Activated CD8-positive, alpha-beta T cell treated with anti-CD3 and anti-CD28 coated beads for 36 hours (primary cell): ENCODE measurements at regions of chr2 and their contacts with region 1.

Region 1: DNA sequence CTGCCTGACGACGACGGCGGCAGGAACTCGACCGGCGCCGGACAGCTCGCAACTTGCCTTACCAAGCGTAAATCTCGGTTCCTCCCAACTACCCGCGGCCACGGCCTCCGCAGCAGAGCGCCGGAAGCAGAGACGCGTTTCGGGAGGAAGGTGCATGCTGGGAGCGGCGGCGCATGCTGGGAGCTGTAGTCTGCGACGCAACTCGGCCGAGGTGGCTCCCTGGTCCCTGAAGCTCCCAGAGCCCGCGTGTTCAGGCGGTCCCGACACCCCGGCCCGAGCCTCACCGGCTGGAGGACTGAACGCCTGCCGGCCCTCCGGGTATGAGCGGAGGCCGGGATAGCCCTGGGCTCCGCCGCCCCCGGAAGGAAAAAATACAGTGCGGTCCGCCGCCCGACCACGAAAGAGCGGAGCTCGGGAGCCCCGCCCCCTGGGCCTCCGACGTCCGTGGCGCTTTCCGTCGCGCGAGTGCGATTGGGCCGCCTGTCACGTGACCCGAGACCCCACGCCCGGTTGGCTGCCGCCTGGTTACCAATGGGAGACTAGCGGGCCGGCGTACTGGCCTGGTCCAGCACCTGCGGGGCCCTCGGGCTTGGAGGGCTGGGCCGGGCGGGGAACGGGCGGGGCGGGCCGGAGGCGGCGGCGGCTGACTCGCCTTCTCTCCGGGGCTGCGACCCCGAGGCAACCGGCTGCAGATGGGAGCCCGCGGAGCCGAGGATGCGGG is at the start of gene CAPN10:
- DNase-seq: peak; percentile 98
- ATAC-seq: peak; percentile 88
- H3K4me3 Mint-ChIP-seq: peak within 1 kb of the TSS; percentile 95
- H3K27ac Mint-ChIP-seq: peak within 1 kb of the TSS; percentile 92
- H3K4me1 Mint-ChIP-seq: peaks cover 36% of the 10 kb centered on the region
- H3K27me3 Mint-ChIP-seq: no peaks in the 10 kb centered on the region
- CTCF ChIP-seq: no peak
- total RNA-seq, gene CAPN10: 26.8 to 29.1 TPM

Region 2: DNA sequence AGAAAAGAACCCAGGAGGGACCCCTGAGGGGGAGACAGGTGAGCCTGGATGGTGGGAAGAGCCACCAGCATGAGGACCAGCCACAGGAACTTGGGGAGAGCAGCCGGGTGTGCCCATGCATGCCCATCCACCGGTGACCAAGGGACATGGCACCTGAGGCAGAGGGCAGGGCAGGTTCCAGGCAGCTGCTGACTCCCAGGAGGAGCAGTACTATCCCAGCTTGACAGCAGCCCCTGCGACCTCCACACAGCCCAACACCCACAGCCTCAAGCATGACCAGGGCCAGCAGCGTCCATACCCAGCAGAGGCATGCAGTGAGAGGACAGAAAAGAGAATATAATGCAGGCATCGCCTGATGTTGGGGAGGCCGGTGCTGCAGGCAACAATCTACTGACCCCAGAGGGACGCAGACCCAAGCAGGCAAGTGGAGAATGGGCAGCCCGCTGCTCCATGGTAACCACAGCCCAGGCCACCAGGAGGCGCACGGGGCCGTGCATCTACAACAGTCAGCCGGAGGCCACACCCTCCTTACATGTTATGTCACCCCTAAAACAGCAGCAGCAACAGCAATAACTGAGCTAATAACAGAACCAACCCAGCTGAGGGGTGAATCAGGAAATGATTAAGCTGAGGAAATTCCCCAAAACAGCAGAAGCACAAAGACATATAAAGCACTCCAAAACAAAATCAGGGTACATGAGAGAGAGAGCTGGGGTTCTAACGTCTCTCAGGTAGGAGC is 72.6 kb before region 1 on chr2:
- CTCF ChIA-PET with region 1: interaction called, 48 read pairs
- POLR2A ChIA-PET with region 1: interaction called, 4 read pairs
- intact Hi-C with region 1: no loop called
- DNase-seq: peak; percentile 95
- ATAC-seq: peak; percentile 100
- H3K4me3 Mint-ChIP-seq: no peak overlapping the region
- H3K27ac Mint-ChIP-seq: peak overlapping the region; percentile 47
- H3K4me1 Mint-ChIP-seq: peaks cover 13% of the 10 kb centered on the region
- H3K27me3 Mint-ChIP-seq: no peaks in the 10 kb centered on the region
- CTCF ChIP-seq: peak; percentile 93

Region 3: DNA sequence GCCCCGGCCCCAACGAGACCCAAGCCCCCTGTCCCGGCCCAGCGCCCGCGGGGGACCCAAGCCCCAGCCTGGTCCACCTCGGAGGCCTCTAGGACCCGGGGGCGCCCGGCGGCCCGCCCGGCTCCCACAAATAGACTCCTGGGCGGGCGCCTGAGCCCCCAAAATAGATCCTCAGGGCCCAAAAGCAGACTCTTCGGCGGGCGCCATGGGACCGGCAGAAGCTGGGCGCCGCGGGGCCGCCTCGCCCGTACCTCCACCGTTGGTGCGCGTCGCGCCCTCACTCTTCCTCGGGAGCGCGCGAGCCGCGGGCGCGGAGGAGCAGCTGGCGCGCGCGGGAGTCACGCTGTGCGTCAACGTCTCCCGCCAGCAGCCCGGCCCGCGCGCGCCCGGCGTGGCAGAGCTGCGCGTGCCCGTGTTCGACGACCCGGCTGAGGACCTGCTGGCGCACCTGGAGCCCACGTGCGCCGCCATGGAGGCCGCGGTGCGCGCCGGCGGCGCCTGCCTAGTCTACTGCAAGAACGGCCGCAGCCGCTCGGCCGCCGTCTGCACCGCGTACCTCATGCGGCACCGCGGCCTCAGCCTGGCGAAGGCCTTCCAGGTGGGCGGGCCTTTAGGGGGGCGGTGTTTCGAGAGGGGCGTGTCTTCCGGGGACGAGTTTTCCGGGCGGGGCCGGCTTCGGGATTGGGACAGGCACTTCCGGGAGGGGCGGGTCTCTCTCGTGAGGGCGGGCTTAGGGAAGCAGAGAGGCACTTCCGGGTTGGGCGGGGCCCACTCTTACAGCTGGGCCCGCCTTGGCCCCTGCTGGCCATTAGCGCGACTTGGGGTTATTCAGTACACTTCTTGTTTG is 25.7 kb before region 1 on chr2:
- CTCF ChIA-PET with region 1: interaction called, 50 read pairs
- POLR2A ChIA-PET with region 1: interaction called, 118 read pairs
- intact Hi-C with region 1: no loop called
- DNase-seq: peak; percentile 100
- ATAC-seq: peak; percentile 65
- H3K4me3 Mint-ChIP-seq: peak overlapping the region; percentile 77
- H3K27ac Mint-ChIP-seq: peak overlapping the region; percentile 91
- H3K4me1 Mint-ChIP-seq: peaks cover 71% of the 10 kb centered on the region
- H3K27me3 Mint-ChIP-seq: no peaks in the 10 kb centered on the region
- CTCF ChIP-seq: no peak

Region 4: GRCh38 chr2:240624950-240625621 is 38.7 kb after region 1 on chr2 and contains the start of gene GPR35:
- CTCF ChIA-PET with region 1: interaction called, 21 read pairs
- POLR2A ChIA-PET with region 1: interaction called, 23 read pairs
- intact Hi-C with region 1: no loop called
- DNase-seq: peak; percentile 93
- ATAC-seq: peak; percentile 55
- H3K4me3 Mint-ChIP-seq: peak within 1 kb of the TSS; percentile 75
- H3K27ac Mint-ChIP-seq: peak within 1 kb of the TSS; percentile 89
- H3K4me1 Mint-ChIP-seq: peaks cover 58% of the 10 kb centered on the region
- H3K27me3 Mint-ChIP-seq: no peaks in the 10 kb centered on the region
- CTCF ChIP-seq: no peak
- total RNA-seq, gene GPR35: 14.4 to 14.6 TPM